Dendritic cell treated with granulocyte-macrophage colony-stimulating factor and Interleukin-4, amounts not matched to agents 40 ng/mL and 50 ng/mL, for 4 days (primary cell): ENCODE measurements at regions of chr12 and their contacts with region 1.

Region 1: DNA sequence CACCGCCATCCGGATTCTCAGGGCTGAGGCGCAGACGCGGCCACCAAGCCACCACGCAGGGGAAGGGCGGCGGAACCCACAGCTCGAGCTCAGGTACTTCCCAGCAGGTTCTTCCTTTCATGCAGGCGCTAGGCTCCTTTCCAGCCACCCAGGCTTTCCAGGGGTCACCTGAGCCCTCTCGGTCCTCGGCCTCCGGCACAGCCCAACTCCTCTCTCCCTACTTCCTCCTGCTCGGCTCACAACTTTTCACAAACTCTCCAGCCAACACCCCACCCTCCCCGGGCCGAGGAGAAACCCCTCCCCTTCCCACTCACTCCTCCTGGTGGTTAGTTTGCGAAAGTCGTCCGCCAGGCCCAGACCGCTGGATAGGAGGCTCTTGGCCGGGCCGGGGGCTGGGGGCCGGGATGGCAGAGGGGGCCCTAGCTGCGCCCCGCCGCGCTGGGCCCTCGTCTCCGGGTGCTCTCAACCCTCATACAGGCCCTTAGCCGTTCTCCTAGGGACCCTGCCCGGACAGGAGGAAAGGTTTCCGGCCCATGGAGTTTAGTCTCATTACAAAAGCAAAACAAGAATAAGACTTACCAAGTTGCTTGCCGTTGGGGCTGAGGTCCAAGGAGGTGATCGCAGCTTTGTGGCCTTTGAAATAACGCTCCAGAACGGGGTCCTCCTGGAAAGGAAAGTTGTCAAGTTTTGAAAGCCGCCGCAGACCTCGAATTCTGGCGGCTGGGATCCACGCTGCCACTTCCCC is at the start of gene GALNT4:
- H3K4me3 Mint-ChIP-seq: peak within 1 kb of the TSS; percentile 97
- H3K27ac Mint-ChIP-seq: peak within 1 kb of the TSS; percentile 97
- H3K4me1 Mint-ChIP-seq: peaks cover 40% of the 10 kb centered on the region
- H3K27me3 Mint-ChIP-seq: no peaks in the 10 kb centered on the region

Region 2: DNA sequence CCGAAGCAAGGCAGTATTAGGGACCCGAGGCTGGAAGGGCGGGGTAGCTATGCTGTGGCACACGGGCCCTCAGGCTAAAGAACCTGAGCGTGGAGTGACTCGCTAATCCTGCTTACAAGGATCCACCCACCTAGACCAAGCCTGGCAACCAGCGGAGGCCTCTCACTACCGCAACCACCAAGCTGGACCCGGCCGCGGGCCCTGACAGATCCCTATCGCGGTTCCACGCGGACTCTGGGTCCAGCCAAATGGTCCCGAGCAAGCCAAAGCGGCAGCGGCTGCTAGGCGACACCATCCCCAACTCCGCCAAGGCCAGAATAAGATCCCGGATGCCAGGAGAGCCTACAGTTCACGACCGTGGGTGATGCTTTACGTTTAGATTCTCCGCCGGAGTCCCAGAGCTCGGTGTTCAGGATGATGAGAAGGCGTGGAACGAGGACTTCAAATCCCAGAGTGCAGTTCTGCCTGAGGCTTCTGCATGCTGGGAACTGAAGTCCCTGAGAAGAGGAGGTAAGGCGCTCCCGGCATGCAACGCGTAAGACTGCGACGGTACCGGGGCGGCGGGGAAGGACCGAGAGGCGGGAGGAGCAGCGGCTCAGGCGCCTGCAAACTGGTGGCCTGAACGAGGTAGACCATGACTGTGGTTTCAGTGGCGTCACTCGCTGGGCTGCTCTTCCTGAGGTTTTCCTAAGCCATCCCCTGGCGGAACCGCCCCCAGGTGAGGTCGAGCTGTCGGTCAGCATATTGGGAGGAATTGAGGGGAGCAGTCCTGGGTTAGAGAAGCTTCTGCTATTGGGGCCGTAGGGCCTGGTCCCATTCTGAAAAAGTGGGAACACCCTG is 1382.7 kb before region 1 on chr12 and contains the starts of genes CEP290 and TMTC3:
- intact Hi-C with region 1: loop called (anchors 5 kb)
- H3K4me3 Mint-ChIP-seq: peak within 1 kb of the TSS; percentile 86
- H3K27ac Mint-ChIP-seq: peak within 1 kb of the TSS; percentile 85
- H3K4me1 Mint-ChIP-seq: peaks cover 20% of the 10 kb centered on the region
- H3K27me3 Mint-ChIP-seq: no peaks in the 10 kb centered on the region

Region 3: GRCh38 chr12:88638966-88639760 is 885.5 kb before region 1 on chr12:
- intact Hi-C with region 1: loop called (anchors 10 kb)
- H3K4me3 Mint-ChIP-seq: peak overlapping the region; percentile 37
- H3K27ac Mint-ChIP-seq: peak overlapping the region; percentile 56
- H3K4me1 Mint-ChIP-seq: peaks cover 12% of the 10 kb centered on the region
- H3K27me3 Mint-ChIP-seq: peaks cover 3% of the 10 kb centered on the region

Region 4: DNA sequence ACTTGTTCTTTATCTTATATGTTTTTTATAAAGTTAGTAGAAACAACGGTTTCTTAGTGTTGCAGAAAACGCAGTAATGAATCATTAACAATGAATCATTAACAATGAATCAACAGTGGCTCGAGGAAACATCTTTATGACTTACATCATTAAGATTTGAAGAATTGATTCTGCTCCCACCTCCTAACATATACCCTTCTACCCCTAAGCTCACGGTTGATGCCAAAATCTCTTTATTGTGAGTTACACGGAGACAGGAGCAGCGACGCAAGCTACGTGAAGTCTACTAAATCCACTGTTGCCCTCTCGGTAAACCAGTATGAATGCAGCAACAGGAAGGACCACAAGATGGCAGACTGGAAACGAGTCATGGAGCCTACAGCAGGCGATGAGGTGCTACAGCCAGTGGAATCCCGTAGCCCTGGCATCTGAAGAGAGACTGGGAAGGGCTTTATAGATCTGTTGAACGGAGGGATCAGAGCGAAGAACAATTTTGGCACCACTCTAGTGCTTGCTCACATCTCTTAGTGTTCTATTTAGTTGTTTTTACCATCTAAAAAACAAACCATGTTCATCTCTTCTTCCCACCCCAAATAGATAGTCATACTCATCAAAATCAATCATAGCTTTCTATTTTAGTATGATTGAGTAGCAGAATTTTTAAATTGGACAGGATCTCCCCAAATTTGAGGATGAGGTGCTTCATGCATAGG is 505.1 kb before region 1 on chr12:
- intact Hi-C with region 1: loop called (anchors 1 kb)
- H3K4me3 Mint-ChIP-seq: no peak overlapping the region
- H3K27ac Mint-ChIP-seq: no peak overlapping the region
- H3K4me1 Mint-ChIP-seq: no peaks in the 10 kb centered on the region
- H3K27me3 Mint-ChIP-seq: peaks cover 2% of the 10 kb centered on the region

Region 5: DNA sequence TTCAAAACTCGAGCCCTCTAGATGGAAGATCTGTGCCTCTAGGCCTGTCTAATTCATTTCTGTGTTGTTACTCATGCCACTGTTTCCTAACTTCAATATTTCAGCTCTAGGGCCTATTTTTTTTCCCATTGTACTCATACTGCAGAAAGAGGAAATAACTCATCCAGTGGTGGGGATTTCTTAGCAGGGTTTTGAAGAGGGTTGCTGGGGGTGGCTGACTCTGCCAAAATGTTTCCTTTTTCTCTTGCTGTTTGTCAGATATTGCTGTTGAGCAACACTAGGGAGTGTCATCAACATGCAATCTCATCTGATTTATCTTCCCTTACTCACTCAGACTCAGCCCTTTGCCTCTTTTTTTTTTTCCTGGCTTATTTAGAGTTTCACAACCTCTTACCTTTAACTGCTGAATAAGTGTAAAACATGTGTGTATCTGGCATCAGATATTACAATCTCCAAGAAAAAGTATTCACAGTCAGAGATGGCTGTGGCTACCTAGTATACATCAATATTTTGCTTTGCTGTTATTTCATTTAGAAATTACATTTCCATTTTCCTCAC is 361.9 kb before region 1 on chr12:
- intact Hi-C with region 1: loop called (anchors 10 kb)
- H3K4me3 Mint-ChIP-seq: no peak overlapping the region
- H3K27ac Mint-ChIP-seq: no peak overlapping the region
- H3K4me1 Mint-ChIP-seq: peaks cover 15% of the 10 kb centered on the region
- H3K27me3 Mint-ChIP-seq: no peaks in the 10 kb centered on the region

Region 6: GRCh38 chr12:89352492-89353187 is 172.1 kb before region 1 on chr12 and contains the start of gene DUSP6:
- intact Hi-C with region 1: loop called (anchors 5 kb)
- H3K4me3 Mint-ChIP-seq: peak within 1 kb of the TSS; percentile 92
- H3K27ac Mint-ChIP-seq: peak within 1 kb of the TSS; percentile 91
- H3K4me1 Mint-ChIP-seq: peaks cover 55% of the 10 kb centered on the region
- H3K27me3 Mint-ChIP-seq: no peaks in the 10 kb centered on the region

Region 7: GRCh38 chr12:89539426-89540223 is 14.9 kb after region 1 on chr12:
- intact Hi-C with region 1: no loop called
- H3K4me3 Mint-ChIP-seq: no peak overlapping the region
- H3K27ac Mint-ChIP-seq: no peak overlapping the region
- H3K4me1 Mint-ChIP-seq: peaks cover 22% of the 10 kb centered on the region
- H3K27me3 Mint-ChIP-seq: peaks cover under 1% of the 10 kb centered on the region